ENCODE measurements at regions of chr20 and their contacts with region 1.

Region 1: DNA sequence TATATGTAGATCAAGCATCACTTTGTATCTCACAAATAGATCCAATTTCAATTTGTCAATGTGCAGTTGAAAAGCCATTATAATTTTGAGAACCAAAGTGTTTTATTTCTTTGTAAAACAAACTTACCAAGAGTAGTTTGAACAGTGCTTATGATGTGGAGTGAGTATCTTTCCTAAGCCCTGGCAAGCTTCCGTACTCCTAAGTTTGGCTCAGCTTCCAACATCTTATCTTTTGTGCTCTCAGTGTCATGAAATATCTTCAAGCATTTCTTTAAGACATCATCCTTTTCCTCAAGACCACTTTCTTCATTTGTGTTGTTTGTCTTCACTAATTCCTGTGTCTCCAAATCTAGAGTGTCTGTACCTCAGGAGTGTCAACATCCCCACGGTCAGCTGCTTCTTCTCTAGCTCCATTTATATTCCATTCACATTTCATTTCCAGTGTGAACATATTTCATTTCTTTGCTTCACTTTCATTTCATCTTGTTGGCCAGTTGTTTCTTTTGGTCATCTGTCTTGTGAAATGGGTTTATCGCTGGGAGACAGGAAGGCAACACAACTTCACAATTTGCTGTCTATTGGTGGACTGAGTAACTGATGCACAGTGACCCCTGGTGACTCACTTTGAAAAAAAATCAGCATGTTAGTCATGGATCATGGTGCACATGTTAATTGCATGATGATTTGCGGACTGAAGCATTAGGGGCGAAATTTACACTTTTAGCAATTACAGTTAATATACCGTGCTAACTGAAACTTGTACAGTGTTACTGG is 36.9 kb downstream of the SLC24A3 start:
- DNase-seq: no peak
- ATAC-seq: peak; percentile 63
- H3K4me3 ChIP-seq: no peak overlapping the region
- H3K27ac ChIP-seq: no peak overlapping the region
- H3K4me1 ChIP-seq: no peaks in the 10 kb centered on the region
- H3K27me3 ChIP-seq: 0 out of 4 replicates have a peak, but pooled peaks cover 0 to 2% of the 10 kb centered on the region in 2 experiments
- CTCF ChIP-seq: peak in 2 of 3 experiments; percentile 18 to 28; a peak in 1 of 6 replicates
- EP300 ChIP-seq: no peak
- POLR2A ChIP-seq: no peak
- RAD21 ChIP-seq: 0 out of 2 replicates have a peak, but pooled peaks have one; percentile 12

Region 2: GRCh38 chr20:18904624-18905023 is 344.7 kb before region 1 on chr20:
- CTCF ChIA-PET with region 1: interaction called, 12 read pairs
- POLR2A ChIA-PET with region 1: no interaction called
- RAD21 ChIA-PET with region 1: no interaction called
- SMC1A ChIA-PET with region 1: no interaction called
- in situ Hi-C with region 1: no loop called
- intact Hi-C with region 1: no loop called
- DNase-seq: no peak
- ATAC-seq: peak; percentile 42; the same call in 1 of the 3 replicates
- H3K4me3 ChIP-seq: no peak overlapping the region
- H3K27ac ChIP-seq: no peak overlapping the region
- H3K4me1 ChIP-seq: no peaks in the 10 kb centered on the region
- H3K27me3 ChIP-seq: no peaks in the 10 kb centered on the region; a peak in 1 of 4 replicates
- CTCF ChIP-seq: peak; percentile 10 to 44 (median 31); a peak in 3 of 6 replicates
- EP300 ChIP-seq: no peak
- POLR2A ChIP-seq: no peak
- RAD21 ChIP-seq: peak; percentile 37; the same call in 1 of the 2 replicates

Region 3: DNA sequence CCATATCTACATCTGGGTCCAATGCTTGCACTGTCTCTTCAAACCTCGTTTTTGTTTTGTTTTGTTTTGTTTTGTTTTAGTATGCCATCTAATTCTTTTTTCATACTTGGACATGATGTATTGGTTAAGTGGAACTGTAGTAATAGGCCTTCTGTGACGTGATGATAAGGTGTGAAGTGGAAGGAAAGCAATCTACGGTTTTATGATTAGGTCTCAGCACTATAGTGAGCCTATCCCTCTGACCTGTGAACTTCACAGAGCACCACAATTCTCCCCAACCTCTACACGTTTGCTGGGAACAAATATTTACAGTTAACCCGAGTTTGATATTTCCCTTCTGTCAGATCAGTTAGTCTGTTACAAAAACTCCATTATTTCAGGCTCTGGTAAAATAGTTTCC is 55.9 kb before region 1 on chr20:
- CTCF ChIA-PET with region 1: no interaction called
- POLR2A ChIA-PET with region 1: no interaction called
- RAD21 ChIA-PET with region 1: no interaction called
- SMC1A ChIA-PET with region 1: no interaction called
- in situ Hi-C with region 1: no loop called
- intact Hi-C with region 1: loop called (anchors 10 kb)
- DNase-seq: no peak
- ATAC-seq: no peak
- H3K4me3 ChIP-seq: no peak overlapping the region
- H3K27ac ChIP-seq: no peak overlapping the region
- H3K4me1 ChIP-seq: no peaks in the 10 kb centered on the region
- H3K27me3 ChIP-seq: no peaks in the 10 kb centered on the region
- CTCF ChIP-seq: no peak
- EP300 ChIP-seq: no peak
- POLR2A ChIP-seq: no peak
- RAD21 ChIP-seq: no peak

Region 4: GRCh38 chr20:20184149-20184548 is 934.9 kb after region 1 on chr20:
- CTCF ChIA-PET with region 1: no interaction called
- POLR2A ChIA-PET with region 1: no interaction called
- RAD21 ChIA-PET with region 1: no interaction called
- SMC1A ChIA-PET with region 1: no interaction called
- in situ Hi-C with region 1: no loop called
- intact Hi-C with region 1: no loop called
- DNase-seq: no peak
- ATAC-seq: peak; percentile 38; the same call in 1 of the 3 replicates
- H3K4me3 ChIP-seq: no peak overlapping the region
- H3K27ac ChIP-seq: no peak overlapping the region
- H3K4me1 ChIP-seq: peaks cover 3% of the 10 kb centered on the region; the same call in 1 of the 2 replicates
- H3K27me3 ChIP-seq: no peaks in the 10 kb centered on the region
- CTCF ChIP-seq: peak; percentile 20 to 60 (median 36); a peak in 4 of 6 replicates
- EP300 ChIP-seq: no peak
- POLR2A ChIP-seq: no peak
- RAD21 ChIP-seq: peak; percentile 33; the same call in 1 of the 2 replicates